Ovary (tissue), 10 donors: ENCODE measurements at regions of chr4 and their contacts with region 1.

Region 1: DNA sequence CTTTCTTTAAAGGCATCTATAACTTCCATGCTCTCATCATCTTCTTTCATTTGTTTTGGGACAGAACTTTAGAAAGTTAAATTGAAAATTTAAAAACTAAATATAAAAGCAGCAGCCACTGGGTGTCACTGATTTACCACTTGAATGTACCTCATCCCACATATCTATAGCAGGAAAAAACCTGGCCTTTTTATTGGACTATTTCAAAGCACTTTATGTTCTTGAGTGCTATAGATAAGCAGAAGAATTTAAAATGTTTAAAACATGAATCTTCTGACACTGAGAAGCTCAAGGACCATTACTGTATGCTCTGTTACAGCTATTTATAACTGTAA is 165.3 kb upstream of the TTC29 start:
- DNase-seq: no peak
- H3K4me3 ChIP-seq: no peak overlapping the region
- H3K27ac ChIP-seq: no peak overlapping the region
- H3K4me1 ChIP-seq: no peaks in the 10 kb centered on the region
- H3K27me3 ChIP-seq: no peaks in the 10 kb centered on the region
- CTCF ChIP-seq: peak; percentile 39 to 61 (median 51)
- EP300 ChIP-seq: no peak
- POLR2A ChIP-seq: no peak

Region 2: GRCh38 chr4:146545102-146545501 is 565.9 kb before region 1 on chr4:
- intact Hi-C with region 1: no loop called
- DNase-seq: no peak
- H3K4me3 ChIP-seq: no peak overlapping the region
- H3K27ac ChIP-seq: no peak overlapping the region
- H3K4me1 ChIP-seq: no peaks in the 10 kb centered on the region
- H3K27me3 ChIP-seq: no peaks in the 10 kb centered on the region
- CTCF ChIP-seq: no peak
- EP300 ChIP-seq: no peak
- POLR2A ChIP-seq: no peak

Region 3: DNA sequence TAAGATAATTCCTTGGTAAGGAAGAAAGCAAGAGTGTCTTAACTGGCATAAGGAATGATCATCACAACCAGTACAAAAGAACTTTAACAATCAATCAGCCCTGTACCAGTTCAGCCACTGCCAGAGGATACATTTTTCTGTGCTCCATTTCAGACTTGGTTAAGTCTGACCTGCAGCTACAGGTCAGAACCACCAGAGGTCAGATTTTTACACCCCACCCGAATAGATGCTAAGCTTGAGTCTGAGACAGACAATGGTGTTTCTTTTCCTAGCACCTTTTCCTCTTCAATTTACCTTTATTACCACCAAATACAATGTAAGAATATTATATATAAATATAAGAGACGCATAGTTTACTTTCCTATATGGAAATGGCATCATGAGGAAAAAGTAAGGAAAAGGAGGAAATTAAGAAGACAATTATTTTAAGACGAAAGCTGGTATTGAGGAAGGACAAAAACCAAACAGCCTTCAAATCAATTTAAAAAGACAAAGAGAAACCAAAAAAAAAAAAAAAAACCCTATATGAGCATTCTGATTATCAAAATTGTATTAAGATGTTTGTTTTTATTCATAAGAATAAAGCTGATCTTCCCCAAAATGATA is 50.0 kb after region 1 on chr4:
- intact Hi-C with region 1: no loop called
- DNase-seq: peak in 1 of 5 donors; percentile 44
- H3K4me3 ChIP-seq: no peak overlapping the region
- H3K27ac ChIP-seq: no peak overlapping the region
- H3K4me1 ChIP-seq: peaks cover 3% of the 10 kb centered on the region
- H3K27me3 ChIP-seq: no peaks in the 10 kb centered on the region
- CTCF ChIP-seq: peak; percentile 31 to 67 (median 61)
- EP300 ChIP-seq: no peak
- POLR2A ChIP-seq: no peak

Region 4: DNA sequence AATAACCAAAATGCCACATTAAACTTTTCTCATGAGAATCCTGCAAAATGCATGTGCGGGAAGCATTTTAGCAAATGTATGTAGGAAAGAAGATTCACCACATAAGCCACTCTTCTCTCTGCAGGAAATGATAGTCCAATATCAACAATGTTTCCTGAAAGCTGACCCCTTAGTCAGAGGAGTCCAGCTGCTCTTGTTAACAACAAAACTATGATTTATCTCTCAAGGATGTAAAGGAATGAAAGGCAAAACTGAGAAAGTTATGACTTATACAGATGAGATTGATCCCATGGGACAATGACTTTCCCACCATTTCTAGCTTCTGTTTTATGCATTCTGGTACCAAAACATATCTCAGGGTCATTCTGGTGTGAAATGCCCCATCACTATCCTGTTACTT is 244.8 kb after region 1 on chr4:
- intact Hi-C with region 1: loop called in 1 of 4 experiments (anchors 10 kb)
- DNase-seq: no peak
- H3K4me3 ChIP-seq: no peak overlapping the region
- H3K27ac ChIP-seq: no peak overlapping the region
- H3K4me1 ChIP-seq: peaks cover 8% of the 10 kb centered on the region
- H3K27me3 ChIP-seq: no peaks in the 10 kb centered on the region
- CTCF ChIP-seq: no peak
- EP300 ChIP-seq: no peak
- POLR2A ChIP-seq: no peak